ENCODE measurements at regions of chr18 and their contacts with region 1.

Region 1: DNA sequence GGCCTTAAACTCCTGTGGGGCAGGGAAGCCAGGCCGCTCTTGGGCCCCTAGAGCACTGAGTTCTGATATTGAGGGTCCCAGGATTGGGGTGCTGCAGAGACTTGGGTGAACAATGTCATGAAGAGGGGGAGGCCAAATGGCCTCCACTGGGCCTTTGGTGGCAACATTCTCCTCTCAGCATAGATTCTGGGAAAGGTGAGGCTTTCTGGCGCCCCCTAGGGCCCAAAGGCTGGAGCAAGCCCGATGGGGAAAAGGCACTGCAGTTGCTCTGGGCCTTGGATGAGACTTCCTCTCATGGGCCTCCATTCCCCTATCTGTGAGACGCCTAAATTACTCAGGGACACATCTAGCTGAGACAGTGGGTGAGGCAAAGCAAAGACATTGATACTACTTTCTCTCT is 84.8 kb downstream of the ACAA2 start:
- DNase-seq: peak; percentile 35
- ATAC-seq: peak; percentile 41
- H3K4me3 ChIP-seq: no peak overlapping the region
- H3K27ac ChIP-seq: no peak overlapping the region
- H3K4me1 ChIP-seq: peaks cover 58% of the 10 kb centered on the region
- H3K27me3 ChIP-seq: no peaks in the 10 kb centered on the region
- CTCF ChIP-seq: peak; percentile 72
- EP300 ChIP-seq: no peak
- POLR2A ChIP-seq: no peak
- RAD21 ChIP-seq: peak; percentile 52; the same call in 1 of the 2 replicates

Region 2: DNA sequence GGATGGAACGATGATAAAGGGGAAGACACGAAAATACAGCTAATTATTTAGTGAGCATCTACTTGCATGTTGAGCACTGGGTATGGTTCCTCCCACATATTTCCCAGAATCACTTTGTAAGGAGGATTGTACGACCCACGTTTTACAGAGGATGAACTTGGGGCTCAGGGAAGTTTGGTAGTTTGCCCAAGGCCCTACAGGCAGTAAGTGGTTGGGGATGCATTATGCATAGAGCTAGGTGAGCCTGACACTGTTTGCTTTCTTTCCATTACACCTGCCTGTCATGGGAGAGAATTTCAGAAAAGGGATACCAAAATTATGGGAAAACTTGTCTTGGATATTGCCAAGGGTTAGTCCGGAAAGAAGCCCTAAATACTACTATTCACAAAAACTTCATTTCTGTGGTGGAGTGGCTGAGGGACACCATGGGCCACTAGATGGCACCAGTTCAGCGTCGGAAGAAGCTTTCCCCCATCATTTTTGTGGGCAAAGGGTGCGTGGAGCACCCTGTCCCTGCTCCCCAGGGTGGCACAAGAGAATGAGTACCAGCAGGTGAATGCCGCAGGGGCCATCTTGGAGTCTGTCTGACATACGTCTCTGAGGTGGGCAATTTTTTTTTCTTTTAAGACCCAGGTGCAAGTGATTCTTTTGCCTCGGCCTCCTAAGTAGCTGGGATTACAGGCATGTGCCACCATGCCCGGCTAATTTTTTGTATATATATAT is 218.0 kb before region 1 on chr18:
- CTCF ChIA-PET with region 1: interaction called, 3 read pairs
- POLR2A ChIA-PET with region 1: no interaction called
- in situ Hi-C with region 1: no loop called
- intact Hi-C with region 1: loop called (anchors 10 kb)
- DNase-seq: no peak
- ATAC-seq: peak; percentile 85
- H3K4me3 ChIP-seq: no peak overlapping the region
- H3K27ac ChIP-seq: no peak overlapping the region
- H3K4me1 ChIP-seq: peaks cover 13% of the 10 kb centered on the region
- H3K27me3 ChIP-seq: 0 out of 5 replicates have a peak, but pooled peaks cover 0 to 2% of the 10 kb centered on the region in 2 experiments
- CTCF ChIP-seq: peak; percentile 89
- EP300 ChIP-seq: no peak
- POLR2A ChIP-seq: no peak
- RAD21 ChIP-seq: peak; percentile 84

Region 3: GRCh38 chr18:49561289-49562193 is 167.0 kb before region 1 on chr18 and contains the start of gene LIPG:
- CTCF ChIA-PET with region 1: no interaction called
- POLR2A ChIA-PET with region 1: no interaction called
- in situ Hi-C with region 1: loop called (anchors 10 kb)
- intact Hi-C with region 1: loop called (anchors 2 kb)
- DNase-seq: peak; percentile 34
- ATAC-seq: peak; percentile 88
- H3K4me3 ChIP-seq: peak within 1 kb of the TSS; percentile 28 to 67 (median 46)
- H3K27ac ChIP-seq: no peak within 1 kb of the TSS
- H3K4me1 ChIP-seq: peaks cover 45% of the 10 kb centered on the region
- H3K27me3 ChIP-seq: peaks cover 16 to 37% of the 10 kb centered on the region in 2 experiments
- CTCF ChIP-seq: no peak
- EP300 ChIP-seq: no peak
- POLR2A ChIP-seq: peak; percentile 53 to 74; a peak in 3 of 4 replicates
- RAD21 ChIP-seq: no peak
- total RNA-seq, gene LIPG: 4.9 and 10.8 TPM in 2 replicates

Region 4: GRCh38 chr18:49630246-49630699 is 98.3 kb before region 1 on chr18:
- CTCF ChIA-PET with region 1: no interaction called
- POLR2A ChIA-PET with region 1: no interaction called
- in situ Hi-C with region 1: no loop called
- intact Hi-C with region 1: loop called (anchors 10 kb)
- DNase-seq: peak; percentile 92
- ATAC-seq: peak; percentile 89
- H3K4me3 ChIP-seq: no peak overlapping the region
- H3K27ac ChIP-seq: peak overlapping the region; percentile 54
- H3K4me1 ChIP-seq: peaks cover 56% of the 10 kb centered on the region
- H3K27me3 ChIP-seq: no peaks in the 10 kb centered on the region
- CTCF ChIP-seq: no peak
- EP300 ChIP-seq: peak; percentile 75 to 76; a peak in 2 of 4 replicates
- POLR2A ChIP-seq: no peak
- RAD21 ChIP-seq: no peak

Measured in HepG2 (cell line).